Sigmoid colon (tissue), 7 donors: ENCODE measurements at regions of chr4 and their contacts with region 1.

Region 1: DNA sequence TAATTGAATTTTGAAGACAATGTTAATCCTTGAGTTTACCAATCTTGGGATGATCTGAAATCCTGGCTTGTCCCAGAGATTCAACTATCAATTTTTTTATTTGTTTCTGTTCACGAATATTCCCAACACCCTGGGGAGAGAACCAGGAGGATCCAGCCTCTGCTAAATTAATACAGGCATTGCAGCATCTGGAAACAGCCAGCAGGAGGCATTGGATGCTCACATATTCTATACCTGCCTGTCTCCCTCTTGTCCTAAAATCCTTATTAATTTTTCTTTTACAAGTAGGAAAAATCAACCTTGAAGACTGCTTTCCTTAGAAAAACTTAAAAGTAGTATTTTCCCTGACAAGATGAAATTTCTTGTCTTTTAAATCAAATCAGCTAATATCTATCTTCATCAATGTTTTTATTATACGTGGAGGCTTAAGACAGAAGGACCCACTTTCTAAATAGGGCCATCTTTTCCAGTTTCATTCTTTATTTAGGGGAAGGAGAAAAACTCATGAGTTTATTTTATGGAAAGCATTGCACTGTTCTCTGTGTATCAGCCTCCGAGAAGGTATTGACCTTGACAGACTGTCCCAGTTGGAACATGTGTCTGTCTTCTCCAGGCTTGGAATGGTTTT is 102.4 kb downstream of the CLNK start:
- DNase-seq: no peak
- H3K4me3 ChIP-seq: no peak overlapping the region
- H3K27ac ChIP-seq: no peak overlapping the region
- H3K4me1 ChIP-seq: peaks cover 0 to 12% (median 3%) of the 10 kb centered on the region in 4 donors
- H3K27me3 ChIP-seq: no peaks in the 10 kb centered on the region
- CTCF ChIP-seq: peak; percentile 40 to 89 (median 78)
- EP300 ChIP-seq: no peak
- POLR2A ChIP-seq: no peak

Region 2: DNA sequence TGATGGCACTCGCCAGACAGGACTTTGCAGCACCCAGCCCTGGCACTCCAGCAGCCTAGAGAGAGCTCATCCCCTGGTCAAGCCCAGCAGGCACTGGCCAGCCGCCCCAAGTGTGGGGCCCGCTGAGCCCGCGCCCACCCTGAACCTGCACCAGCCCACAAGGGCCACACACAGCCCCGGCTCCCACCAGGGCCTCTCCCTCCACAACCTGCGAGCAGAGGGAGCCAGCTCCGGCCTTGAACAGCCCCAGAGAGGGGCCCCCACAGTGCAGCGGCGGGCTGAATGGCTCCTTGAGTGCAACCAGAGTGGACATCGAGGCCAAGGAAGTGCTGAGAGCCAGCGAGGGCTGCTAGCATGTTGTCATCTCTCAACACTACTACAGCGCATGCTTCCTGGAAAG is 1172.4 kb before region 1 on chr4:
- intact Hi-C with region 1: no loop called
- DNase-seq: no peak
- H3K4me3 ChIP-seq: no peak overlapping the region
- H3K27ac ChIP-seq: no peak overlapping the region
- H3K4me1 ChIP-seq: no peaks in the 10 kb centered on the region
- H3K27me3 ChIP-seq: no peaks in the 10 kb centered on the region
- CTCF ChIP-seq: no peak
- EP300 ChIP-seq: no peak
- POLR2A ChIP-seq: no peak

Region 3: GRCh38 chr4:10866666-10867065 is 284.5 kb after region 1 on chr4:
- intact Hi-C with region 1: no loop called
- DNase-seq: no peak
- H3K4me3 ChIP-seq: no peak overlapping the region
- H3K27ac ChIP-seq: no peak overlapping the region
- H3K4me1 ChIP-seq: no peaks in the 10 kb centered on the region
- H3K27me3 ChIP-seq: no peaks in the 10 kb centered on the region
- CTCF ChIP-seq: no peak
- EP300 ChIP-seq: no peak
- POLR2A ChIP-seq: no peak

Region 4: DNA sequence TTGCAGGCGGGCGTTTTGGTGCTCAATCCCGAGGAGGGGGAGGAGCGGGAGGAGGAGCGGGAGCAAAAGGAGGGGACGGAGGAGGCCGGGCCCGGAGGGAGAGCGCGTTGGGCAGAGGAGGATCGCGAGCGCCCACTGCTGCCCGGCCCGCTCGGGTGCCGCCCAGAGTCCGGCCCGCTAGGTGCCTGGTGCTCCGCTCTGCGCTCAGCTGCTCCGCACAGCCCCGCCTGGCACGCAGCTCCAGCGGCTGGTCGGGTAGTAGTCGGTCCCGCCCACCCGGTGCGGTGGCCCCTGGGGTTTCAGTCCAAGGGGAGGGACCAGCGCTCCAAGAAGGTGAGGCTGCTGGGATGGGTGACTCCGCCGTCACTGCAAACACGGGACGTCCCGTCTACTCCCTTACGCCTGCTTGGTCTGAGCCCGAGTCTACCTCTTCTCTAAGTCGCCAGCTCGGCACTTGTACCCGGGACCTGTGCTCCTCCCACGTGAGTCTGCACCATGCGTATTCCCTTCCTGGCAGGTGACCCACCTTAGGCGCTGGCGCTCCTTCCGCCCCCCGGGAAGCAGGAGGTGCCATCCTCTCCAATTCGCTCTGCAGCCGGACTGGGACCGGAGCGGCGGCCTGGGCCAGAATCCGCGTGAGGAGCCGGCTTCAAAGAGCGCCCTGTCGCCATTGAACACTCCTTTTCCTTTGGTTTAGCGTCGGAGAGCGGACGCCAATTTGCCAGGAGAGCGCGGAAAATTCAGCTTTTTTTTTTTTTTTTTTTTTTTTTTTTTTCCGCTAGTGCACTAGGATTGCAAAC is 846.9 kb after region 1 on chr4:
- intact Hi-C with region 1: loop called (anchors 2 kb)
- DNase-seq: peak; percentile 87
- H3K4me3 ChIP-seq: peak overlapping the region; percentile 38 to 65 (median 56)
- H3K27ac ChIP-seq: peak overlapping the region; percentile 2 to 54 (median 38)
- H3K4me1 ChIP-seq: peaks cover 0 to 29% (median 23%) of the 10 kb centered on the region in 4 donors
- H3K27me3 ChIP-seq: peaks cover 10 to 23% (median 19%) of the 10 kb centered on the region in 3 donors
- CTCF ChIP-seq: peak; percentile 12 to 68 (median 52)
- EP300 ChIP-seq: no peak
- POLR2A ChIP-seq: peak in 1 of 2 donors; percentile 6